Left colon (tissue), 2 donors: ENCODE measurements at regions of chr22 and their contacts with region 1.

Region 1: DNA sequence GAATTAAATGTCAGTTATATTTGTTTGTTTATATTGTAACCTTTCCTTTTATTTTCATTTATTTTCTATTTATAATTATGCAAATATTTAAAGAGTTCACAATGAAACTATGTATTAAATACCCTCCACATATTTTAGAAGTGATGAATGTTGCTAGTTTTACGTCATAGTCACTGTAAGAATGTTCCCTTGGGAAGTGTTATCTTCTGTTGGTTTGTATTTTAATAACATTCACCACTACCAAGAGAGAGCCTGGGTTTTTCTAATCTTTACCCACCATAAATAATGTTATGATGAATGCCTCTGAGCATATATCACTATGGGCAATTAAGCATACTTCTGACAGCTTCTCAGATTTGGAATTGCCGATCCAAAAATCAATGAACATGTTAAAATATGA is 80.7 kb downstream of the GGT1 start:
- DNase-seq: no peak
- ATAC-seq: no peak

Region 2: GRCh38 chr22:23353004-23353403 is 1330.7 kb before region 1 on chr22:
- intact Hi-C with region 1: loop called in 1 of 2 experiments (anchors 10 kb)
- DNase-seq: no peak
- ATAC-seq: no peak